ENCODE measurements at regions of chr12 and their contacts with region 1.

Region 1: GRCh38 chr12:123983822-123984485 is 10.9 kb downstream of the ZNF664 start:
- H3K4me3 Mint-ChIP-seq: no peak overlapping the region
- H3K27ac Mint-ChIP-seq: peak overlapping the region; percentile 50
- H3K4me1 Mint-ChIP-seq: peaks cover 23% of the 10 kb centered on the region
- H3K27me3 Mint-ChIP-seq: no peaks in the 10 kb centered on the region

Region 2: GRCh38 chr12:123801573-123802178 is 182.3 kb before region 1 on chr12:
- intact Hi-C with region 1: loop called (anchors 10 kb)
- H3K4me3 Mint-ChIP-seq: no peak overlapping the region
- H3K27ac Mint-ChIP-seq: no peak overlapping the region
- H3K4me1 Mint-ChIP-seq: no peaks in the 10 kb centered on the region
- H3K27me3 Mint-ChIP-seq: no peaks in the 10 kb centered on the region

Region 3: DNA sequence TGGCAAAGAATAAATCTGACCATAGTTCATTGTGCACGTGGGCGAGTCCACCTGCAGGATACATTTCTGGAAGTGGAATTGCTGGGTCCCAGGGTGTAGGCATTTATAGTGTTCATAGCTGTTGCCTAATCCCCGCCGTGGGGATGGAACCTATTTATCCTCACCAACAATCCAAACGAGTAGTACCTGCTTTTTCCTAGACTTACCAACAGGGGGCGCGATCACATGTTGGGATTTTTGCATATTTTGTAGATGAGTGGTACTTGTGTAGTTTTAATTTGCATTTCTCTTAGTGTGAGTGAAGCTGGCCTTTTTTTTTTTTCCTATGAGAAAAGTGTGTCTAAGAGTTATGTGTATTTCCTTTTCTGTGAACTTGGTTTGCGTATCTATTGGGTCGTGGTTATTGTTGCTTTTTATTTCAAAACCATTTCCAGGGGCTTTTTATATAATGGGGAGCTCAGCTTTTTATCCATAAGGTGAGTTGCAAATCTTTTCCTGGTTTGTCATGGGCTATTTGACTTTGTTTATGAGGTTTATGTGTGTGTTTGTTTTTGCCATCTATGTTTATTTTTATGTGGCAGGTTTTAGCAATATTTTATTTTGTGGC is 78.5 kb before region 1 on chr12:
- intact Hi-C with region 1: loop called (anchors 1 kb)
- H3K4me3 Mint-ChIP-seq: no peak overlapping the region
- H3K27ac Mint-ChIP-seq: no peak overlapping the region
- H3K4me1 Mint-ChIP-seq: peaks cover 15% of the 10 kb centered on the region
- H3K27me3 Mint-ChIP-seq: peaks cover 11% of the 10 kb centered on the region

Region 4: GRCh38 chr12:124152731-124153130 is 168.8 kb after region 1 on chr12:
- intact Hi-C with region 1: no loop called
- H3K4me3 Mint-ChIP-seq: no peak overlapping the region
- H3K27ac Mint-ChIP-seq: no peak overlapping the region
- H3K4me1 Mint-ChIP-seq: no peaks in the 10 kb centered on the region
- H3K27me3 Mint-ChIP-seq: peaks cover 15% of the 10 kb centered on the region

Measured in dendritic cell treated with granulocyte-macrophage colony-stimulating factor and Interleukin-4, amounts not matched to agents 40 ng/mL and 50 ng/mL, for 4 days (primary cell).